A549 (cell line): ENCODE measurements at regions of chr6 and their contacts with region 1.

Region 1: GRCh38 chr6:56862415-56863175 is 92.3 kb upstream of the BEND6 start:
- DNase-seq: no peak
- ATAC-seq: peak; percentile 45 to 51; a peak in 5 of 6 replicates
- H3K4me3 ChIP-seq: 0 out of 3 replicates have a peak overlapping the region, but pooled peaks have one; percentile 1
- H3K27ac ChIP-seq: peak overlapping the region; percentile 77 to 86
- H3K4me1 ChIP-seq: peaks cover 75% of the 10 kb centered on the region
- CTCF ChIP-seq: no peak
- EP300 ChIP-seq: no peak
- POLR2A ChIP-seq: no peak
- RAD21 ChIP-seq: no peak

Region 2: DNA sequence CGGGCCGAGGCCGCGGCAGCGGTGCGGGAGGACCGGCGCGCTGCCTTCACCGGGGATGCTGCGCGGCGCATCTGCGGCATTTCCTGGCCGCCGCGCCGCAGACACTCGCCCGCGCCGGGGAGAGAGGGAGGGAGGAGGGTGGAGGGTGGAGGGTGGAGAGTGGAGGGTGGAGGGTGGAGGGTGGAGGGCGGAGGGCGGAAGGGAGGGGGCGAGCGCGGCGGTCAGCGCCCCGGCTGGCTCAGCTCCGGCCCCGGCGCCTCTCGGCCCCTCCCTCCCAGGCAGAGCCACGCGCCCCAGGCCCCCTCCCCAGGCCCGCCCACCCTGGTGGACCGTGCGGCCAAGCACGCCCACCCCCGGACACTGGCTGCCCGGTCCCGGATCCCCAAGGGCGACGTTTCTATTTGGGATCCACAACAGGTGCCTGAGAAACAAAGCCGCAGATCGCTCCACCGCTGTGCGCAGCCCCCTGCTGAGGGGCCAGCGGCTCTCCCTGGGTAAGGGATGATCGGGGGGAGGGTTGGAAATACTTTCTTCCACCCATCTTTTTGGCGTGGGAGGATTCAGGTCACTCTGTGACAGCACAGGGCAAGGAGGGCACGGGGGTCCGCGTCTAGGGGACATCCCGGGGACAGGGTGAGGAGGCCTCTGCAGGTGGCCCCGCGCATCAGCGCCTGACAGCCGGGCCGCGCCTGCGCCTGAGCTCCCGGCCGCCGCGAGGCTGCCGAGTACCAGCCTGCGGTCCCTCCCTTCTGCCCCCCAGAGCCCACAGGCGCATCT is 18.8 kb before region 1 on chr6:
- CTCF ChIA-PET with region 1: interaction called, 12 read pairs
- POLR2A ChIA-PET with region 1: no interaction called
- DNase-seq: peak; percentile 65 to 90
- ATAC-seq: peak; percentile 92 to 96
- H3K4me3 ChIP-seq: peak overlapping the region; percentile 90
- H3K27ac ChIP-seq: peak overlapping the region; percentile 97 to 100
- H3K4me1 ChIP-seq: peaks cover 43% of the 10 kb centered on the region
- CTCF ChIP-seq: peak; percentile 47; the same call in 2 of the 3 replicates
- EP300 ChIP-seq: no peak
- POLR2A ChIP-seq: peak; percentile 59
- RAD21 ChIP-seq: peak; percentile 52 to 61

Region 3: GRCh38 chr6:56851541-56852259 is 10.9 kb before region 1 on chr6:
- CTCF ChIA-PET with region 1: interaction called, 46 read pairs
- POLR2A ChIA-PET with region 1: interaction called, 4 read pairs
- DNase-seq: peak; percentile 46 to 65
- ATAC-seq: peak; percentile 92 to 94
- H3K4me3 ChIP-seq: no peak overlapping the region
- H3K27ac ChIP-seq: peak overlapping the region; percentile 24 to 74; a peak in 4 of 6 replicates
- H3K4me1 ChIP-seq: peaks cover 34% of the 10 kb centered on the region
- CTCF ChIP-seq: peak; percentile 67
- EP300 ChIP-seq: no peak
- POLR2A ChIP-seq: no peak
- RAD21 ChIP-seq: peak; percentile 74 to 81

Region 4: GRCh38 chr6:56914798-56915658 is 52.4 kb after region 1 on chr6:
- CTCF ChIA-PET with region 1: no interaction called
- POLR2A ChIA-PET with region 1: no interaction called
- DNase-seq: no peak
- ATAC-seq: no peak
- H3K4me3 ChIP-seq: no peak overlapping the region
- H3K27ac ChIP-seq: no peak overlapping the region
- H3K4me1 ChIP-seq: peaks cover 10% of the 10 kb centered on the region; the same call in 1 of the 3 replicates
- CTCF ChIP-seq: no peak
- EP300 ChIP-seq: no peak
- POLR2A ChIP-seq: no peak
- RAD21 ChIP-seq: no peak